ENCODE measurements at regions of chr6 and their contacts with region 1.

Region 1: DNA sequence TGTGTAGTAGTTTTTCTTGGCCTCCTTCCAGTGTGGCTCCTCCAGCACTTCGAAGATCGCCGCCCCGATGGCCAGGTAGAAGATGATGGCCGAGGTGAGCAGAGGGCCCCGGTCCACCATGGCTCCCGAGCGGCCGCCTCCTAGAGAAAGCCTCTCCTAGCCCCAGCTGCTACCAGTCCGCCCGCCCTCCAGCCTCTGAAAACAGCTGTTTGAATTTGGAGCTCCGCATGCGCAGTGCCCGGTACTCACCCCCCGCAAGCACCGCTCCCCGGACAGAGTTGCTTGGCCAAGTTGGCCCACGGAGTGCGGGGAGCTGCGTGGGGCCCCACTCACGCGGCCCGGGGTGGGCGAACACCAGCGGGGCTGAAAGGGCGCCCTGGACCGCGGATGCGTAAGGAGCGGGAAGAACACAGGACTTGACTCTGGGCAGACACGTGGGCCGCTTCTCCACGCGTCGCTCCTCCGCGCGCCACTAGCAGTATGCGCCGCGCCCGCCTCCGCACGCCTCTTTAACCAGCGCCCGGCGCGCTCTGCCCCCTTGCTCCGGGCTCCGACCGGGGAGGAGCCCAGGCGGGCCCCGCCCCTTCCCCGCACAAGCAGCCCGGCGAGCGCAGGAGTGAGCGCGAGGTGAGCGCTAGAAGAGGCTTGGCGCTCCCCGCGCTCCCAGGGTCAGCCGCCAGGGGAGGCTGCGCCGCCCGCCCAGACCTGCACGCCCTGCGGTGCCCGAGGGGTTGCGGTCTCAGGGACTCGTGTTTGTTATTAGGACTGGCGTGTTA is at the start of gene KCNK5:
- H3K4me3 ChIP-seq: peak within 1 kb of the TSS; percentile 49
- H3K27ac ChIP-seq: peak within 1 kb of the TSS; percentile 6; the same call in 1 of the 2 replicates
- H3K4me1 ChIP-seq: no peaks in the 10 kb centered on the region
- CTCF ChIP-seq: peak; percentile 88

Region 2: GRCh38 chr6:39153766-39154397 is 75.3 kb before region 1 on chr6:
- CTCF ChIA-PET with region 1: no interaction called
- POLR2A ChIA-PET with region 1: no interaction called
- H3K4me3 ChIP-seq: no peak overlapping the region
- H3K27ac ChIP-seq: no peak overlapping the region
- H3K4me1 ChIP-seq: peaks cover 6% of the 10 kb centered on the region; the same call in 1 of the 2 replicates
- CTCF ChIP-seq: no peak

Region 3: DNA sequence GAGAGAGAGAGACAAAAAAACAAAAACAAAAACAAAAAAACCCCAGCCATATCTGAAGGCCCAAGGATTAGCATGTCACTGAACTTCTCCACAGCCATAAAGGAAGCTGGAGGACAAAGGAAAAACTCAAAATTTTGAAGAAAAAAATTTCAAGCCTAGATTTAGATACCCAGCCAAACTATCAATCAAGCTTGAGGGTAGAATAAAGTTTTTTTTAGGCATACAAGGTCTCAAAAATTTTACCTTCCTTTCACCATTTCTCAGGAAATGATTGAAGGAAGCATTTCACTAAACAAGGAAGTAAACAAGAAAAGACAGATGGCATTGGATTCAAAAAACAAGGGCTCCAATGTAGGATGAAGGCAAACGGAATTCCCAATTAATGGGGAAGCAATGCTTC is 52.0 kb before region 1 on chr6:
- CTCF ChIA-PET with region 1: no interaction called
- POLR2A ChIA-PET with region 1: no interaction called
- H3K4me3 ChIP-seq: no peak overlapping the region
- H3K27ac ChIP-seq: no peak overlapping the region
- H3K4me1 ChIP-seq: no peaks in the 10 kb centered on the region
- CTCF ChIP-seq: no peak

Region 4: DNA sequence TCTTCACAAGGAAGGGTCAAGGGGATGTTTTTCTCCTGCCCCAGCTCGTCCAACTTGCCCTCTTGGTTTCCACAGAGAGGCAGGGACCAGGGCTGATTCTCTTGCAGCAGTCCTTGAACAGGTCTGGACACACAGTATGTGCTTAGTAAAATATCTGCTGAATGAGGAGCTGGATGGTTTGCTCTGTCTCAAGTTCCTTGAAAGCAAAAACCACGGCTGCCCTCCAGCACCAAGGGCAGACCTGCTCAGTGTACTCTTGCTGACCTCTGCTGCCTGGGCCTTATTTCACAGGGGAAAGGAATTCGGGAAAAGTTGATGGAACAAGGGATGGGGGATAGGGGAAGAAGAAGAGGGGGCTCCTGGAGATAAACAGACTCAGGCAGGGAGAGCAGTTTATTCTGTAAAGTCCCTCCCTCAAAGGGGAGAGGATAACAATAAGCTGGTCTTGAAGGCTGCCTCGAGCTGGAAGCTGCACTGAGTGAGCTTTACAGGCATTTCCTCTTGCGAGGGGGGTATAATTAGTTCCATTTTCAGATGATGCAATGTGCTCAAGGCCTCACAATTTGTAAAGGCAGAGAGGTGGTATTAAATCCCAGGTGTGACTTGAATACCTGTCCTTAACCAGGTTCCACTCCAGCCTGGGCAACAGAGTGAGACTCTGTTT is 10.2 kb before region 1 on chr6:
- CTCF ChIA-PET with region 1: interaction called, 16 read pairs
- POLR2A ChIA-PET with region 1: interaction called, 3 read pairs
- H3K4me3 ChIP-seq: no peak overlapping the region
- H3K27ac ChIP-seq: no peak overlapping the region
- H3K4me1 ChIP-seq: peaks cover 16% of the 10 kb centered on the region
- CTCF ChIP-seq: no peak